ENCODE measurements at regions of chr18 and their contacts with region 1.

Region 1: GRCh38 chr18:23612435-23613085 is 26.3 kb upstream of the NPC1 start:
- DNase-seq: no peak
- ATAC-seq: no peak
- H3K4me3 Mint-ChIP-seq: no peak overlapping the region
- H3K27ac Mint-ChIP-seq: no peak overlapping the region
- H3K4me1 Mint-ChIP-seq: no peaks in the 10 kb centered on the region
- H3K27me3 Mint-ChIP-seq: peaks cover 3% of the 10 kb centered on the region

Region 2: GRCh38 chr18:23553887-23554286 is 58.7 kb before region 1 on chr18:
- CTCF ChIA-PET with region 1: no interaction called
- POLR2A ChIA-PET with region 1: no interaction called
- intact Hi-C with region 1: no loop called
- DNase-seq: no peak
- ATAC-seq: no peak
- H3K4me3 Mint-ChIP-seq: no peak overlapping the region
- H3K27ac Mint-ChIP-seq: no peak overlapping the region
- H3K4me1 Mint-ChIP-seq: no peaks in the 10 kb centered on the region
- H3K27me3 Mint-ChIP-seq: no peaks in the 10 kb centered on the region

Region 3: GRCh38 chr18:23599809-23600208 is 12.8 kb before region 1 on chr18:
- CTCF ChIA-PET with region 1: interaction called, 12 read pairs
- POLR2A ChIA-PET with region 1: no interaction called
- intact Hi-C with region 1: no loop called
- DNase-seq: no peak
- ATAC-seq: no peak
- H3K4me3 Mint-ChIP-seq: no peak overlapping the region
- H3K27ac Mint-ChIP-seq: no peak overlapping the region
- H3K4me1 Mint-ChIP-seq: no peaks in the 10 kb centered on the region
- H3K27me3 Mint-ChIP-seq: no peaks in the 10 kb centered on the region

Region 4: GRCh38 chr18:24296276-24296675 is 683.7 kb after region 1 on chr18:
- CTCF ChIA-PET with region 1: no interaction called
- POLR2A ChIA-PET with region 1: no interaction called
- intact Hi-C with region 1: no loop called
- DNase-seq: no peak
- ATAC-seq: no peak
- H3K4me3 Mint-ChIP-seq: no peak overlapping the region
- H3K27ac Mint-ChIP-seq: no peak overlapping the region
- H3K4me1 Mint-ChIP-seq: peaks cover 2% of the 10 kb centered on the region
- H3K27me3 Mint-ChIP-seq: no peaks in the 10 kb centered on the region